ENCODE measurements at regions of chr17 and their contacts with region 1.

Region 1: DNA sequence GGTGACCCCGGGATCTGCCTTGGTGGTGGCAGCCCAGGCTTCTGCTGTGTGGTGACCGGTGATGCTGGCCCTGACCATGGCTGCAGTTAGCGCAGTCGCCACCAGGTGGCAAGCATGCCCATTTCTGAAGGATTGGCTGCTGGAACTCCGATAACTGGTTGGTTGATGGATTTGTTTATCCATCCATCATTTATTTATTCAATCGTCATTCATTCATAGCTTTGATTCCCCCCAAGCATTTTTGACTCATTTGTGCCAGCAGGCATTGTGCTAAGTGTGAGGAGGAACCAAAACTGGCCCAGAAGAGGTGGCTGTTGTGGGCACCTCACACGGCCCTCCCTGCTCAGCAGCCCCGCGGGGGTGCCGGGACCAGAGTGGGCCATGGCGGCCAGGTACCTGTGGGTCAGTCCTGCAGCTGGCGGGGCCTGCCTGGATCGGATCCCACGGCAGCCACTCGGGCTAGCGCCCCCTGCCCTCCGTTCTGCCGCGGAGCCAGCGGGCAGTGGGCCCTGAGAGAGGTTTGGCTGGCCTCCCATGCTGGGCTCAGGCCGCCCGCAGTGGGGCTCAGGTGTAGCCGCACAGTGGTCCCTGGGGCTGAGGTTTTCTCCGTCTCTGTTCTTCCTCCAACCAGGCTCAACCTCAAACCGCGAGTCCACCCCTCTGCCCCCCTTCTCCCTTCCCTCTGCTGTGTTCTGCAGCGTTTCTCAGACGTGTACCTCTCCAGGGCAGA is 28.8 kb upstream of the ITGA3 start:
- H3K4me3 ChIP-seq: peak overlapping the region; percentile 11
- H3K27ac ChIP-seq: no peak overlapping the region
- H3K4me1 ChIP-seq: no peaks in the 10 kb centered on the region
- CTCF ChIP-seq: peak; percentile 53

Region 2: DNA sequence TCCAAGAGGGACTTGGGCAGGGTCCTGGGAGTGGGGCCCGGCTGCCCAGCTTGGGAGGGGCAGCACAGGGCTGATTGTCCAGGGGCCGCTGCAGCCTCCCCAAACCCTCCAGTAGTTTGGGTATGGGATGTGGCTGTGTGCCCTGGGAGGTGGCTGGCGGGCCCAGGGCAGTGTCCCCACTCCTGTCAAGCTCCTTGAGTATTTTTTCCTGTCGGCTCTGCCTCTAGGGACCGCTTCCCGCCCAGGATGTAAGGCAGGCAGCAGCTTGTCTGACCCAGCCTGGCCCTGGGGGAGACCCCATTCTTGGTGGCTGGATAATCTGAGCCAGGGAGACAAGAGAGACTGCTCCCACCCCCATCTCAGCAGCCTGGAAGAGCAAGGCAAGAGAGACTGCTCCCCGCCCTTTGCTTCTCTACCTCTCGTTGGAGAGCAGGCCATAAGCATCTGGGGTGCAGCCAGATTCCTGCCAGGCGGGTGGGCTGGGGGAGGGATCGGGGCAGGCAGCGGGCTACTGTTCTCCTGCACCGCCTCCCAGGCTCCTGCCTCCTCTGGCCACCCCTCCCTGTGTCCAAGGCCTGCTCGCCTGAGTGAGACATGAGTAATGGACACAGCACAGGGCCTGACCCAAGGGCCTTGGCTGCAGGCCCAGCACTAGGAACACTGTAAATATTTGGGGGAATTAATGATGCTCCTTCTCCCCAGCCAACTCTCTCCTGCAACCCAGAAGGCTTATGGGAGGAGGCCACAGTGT is 10.4 kb after region 1 on chr17:
- CTCF ChIA-PET with region 1: interaction called, 10 read pairs
- POLR2A ChIA-PET with region 1: no interaction called
- H3K4me3 ChIP-seq: no peak overlapping the region
- H3K27ac ChIP-seq: no peak overlapping the region
- H3K4me1 ChIP-seq: no peaks in the 10 kb centered on the region
- CTCF ChIP-seq: no peak

Region 3: DNA sequence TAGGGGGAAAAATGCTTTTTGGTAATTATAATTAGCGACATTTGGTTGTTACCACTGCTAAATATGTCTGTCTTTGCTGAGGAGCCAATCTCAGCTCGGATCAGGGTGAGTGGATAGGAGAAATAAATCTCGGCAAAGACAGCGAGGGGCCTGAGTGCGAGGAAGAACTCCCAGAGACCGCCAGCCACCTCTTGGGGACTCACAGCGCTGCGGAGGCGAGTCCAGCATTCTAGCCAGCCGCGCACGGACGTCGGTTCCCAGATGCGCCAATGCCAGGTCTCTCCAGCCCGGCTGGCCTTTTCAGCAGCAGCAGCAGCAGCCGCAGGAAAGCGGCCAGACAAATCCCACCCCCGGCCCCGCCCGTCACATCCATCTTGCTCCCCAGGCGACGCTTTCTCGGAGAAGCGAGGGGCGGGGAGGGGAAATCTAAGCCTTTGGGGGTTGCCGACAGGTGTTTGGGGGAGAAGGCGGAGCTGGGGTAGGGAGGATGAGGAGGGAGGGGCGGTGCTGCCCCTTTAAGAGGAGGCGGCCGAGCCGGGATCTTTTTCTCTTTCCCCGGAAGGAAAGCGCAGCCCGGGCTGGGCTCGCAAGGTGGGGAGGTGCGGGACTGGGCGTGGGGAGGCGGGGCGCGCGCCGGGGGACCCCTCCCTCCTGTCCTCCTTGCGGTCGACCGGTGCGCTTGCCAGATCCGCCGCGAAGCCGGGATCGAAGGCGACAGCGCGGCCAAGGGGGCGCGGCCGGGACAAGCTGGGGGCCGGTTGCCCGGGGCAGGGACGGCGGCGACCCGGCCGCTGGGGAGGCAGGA is 28.6 kb after region 1 on chr17 and contains the start of gene ITGA3:
- CTCF ChIA-PET with region 1: interaction called, 74 read pairs
- POLR2A ChIA-PET with region 1: no interaction called
- H3K4me3 ChIP-seq: peak within 1 kb of the TSS; percentile 64
- H3K27ac ChIP-seq: peak within 1 kb of the TSS; percentile 75
- H3K4me1 ChIP-seq: peaks cover 16% of the 10 kb centered on the region
- CTCF ChIP-seq: no peak

Region 4: DNA sequence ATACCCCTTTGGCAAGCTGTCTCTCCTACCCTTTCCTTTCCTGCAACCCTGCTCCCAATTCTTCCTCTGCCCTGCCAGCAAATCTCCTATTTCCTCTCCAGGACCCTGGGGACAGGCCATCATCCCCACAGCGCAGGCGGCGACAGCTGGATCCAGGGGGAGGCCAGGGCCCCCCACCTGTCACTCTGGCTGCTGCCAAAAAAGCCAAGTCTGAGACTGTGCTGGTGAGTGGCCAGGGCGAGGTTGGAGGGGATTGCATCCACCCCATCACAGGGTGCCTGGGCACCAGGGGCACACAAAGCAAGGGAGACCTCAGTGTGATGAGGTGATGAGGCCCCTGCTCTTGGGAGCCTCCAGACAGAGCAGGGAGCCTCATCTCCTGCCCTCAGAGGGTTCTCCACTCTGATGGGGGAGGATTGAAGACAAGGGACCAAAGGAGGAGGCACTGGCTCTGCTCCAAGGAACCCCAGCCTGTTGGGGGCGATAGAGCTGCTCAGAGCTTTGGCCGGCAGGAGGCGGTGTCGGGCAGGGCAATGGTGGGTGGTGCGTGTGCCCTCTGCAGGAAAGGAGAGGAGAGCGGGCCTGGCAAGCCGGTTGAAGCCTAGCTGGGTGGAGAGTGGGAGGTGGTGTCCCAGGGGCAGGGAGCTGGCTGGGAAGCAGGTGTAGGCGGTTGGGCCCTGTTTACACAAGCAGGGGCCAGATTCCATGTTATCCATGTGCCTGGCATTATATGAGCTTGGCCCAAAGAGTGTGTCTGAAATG is 52.4 kb after region 1 on chr17:
- CTCF ChIA-PET with region 1: interaction called, 50 read pairs
- POLR2A ChIA-PET with region 1: no interaction called
- H3K4me3 ChIP-seq: no peak overlapping the region
- H3K27ac ChIP-seq: no peak overlapping the region
- H3K4me1 ChIP-seq: no peaks in the 10 kb centered on the region
- CTCF ChIP-seq: peak; percentile 87